Activated CD4-positive, alpha-beta T cell treated with anti-CD3 and anti-CD28 coated beads, Interleukin-2, amount 10 ng/mL, durations not matched to agents 24 days and 14 days (primary cell): ENCODE measurements at regions of chr2 and their contacts with region 1.

Region 1: DNA sequence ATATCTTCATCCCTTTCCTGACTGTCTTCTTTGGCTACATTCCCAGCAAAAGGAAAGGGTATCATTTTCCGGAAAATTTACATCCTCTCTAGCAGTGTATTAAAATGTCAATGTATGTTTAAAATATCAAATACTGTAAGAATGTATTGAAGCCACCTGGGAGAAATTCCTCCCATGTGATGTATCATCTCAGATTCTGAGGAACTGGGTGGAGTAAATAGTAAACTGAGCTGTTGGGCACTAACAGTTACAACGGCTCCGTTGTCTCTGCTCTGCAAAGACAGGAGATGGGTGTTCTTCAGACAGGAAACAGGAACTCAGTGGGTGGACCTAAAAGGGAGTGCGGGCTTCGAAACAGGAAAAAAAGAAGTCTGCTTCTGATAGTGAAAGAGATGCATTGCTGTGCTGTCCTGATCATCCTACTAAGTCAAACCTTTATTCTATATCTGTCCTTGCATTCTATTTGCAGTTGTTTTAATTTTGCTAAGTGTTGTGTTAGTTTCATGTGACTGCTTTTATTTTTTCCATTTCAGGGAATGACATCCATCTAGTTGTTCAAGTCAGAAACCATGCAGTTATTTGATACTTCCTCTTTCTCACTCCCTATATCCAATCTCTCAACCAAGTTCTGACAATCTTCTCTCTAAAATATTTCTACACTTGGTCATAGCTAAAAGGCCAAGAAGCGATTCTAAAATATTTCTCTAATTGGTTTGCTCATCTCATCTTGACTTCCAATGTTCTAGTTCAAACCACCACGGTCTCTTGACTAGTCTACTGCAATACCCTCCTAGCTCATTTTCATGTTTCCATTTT is 19.4 kb downstream of the DOK1 start:
- DNase-seq: peak; percentile 83
- H3K4me3 Mint-ChIP-seq: peak overlapping the region; percentile 75
- H3K27ac Mint-ChIP-seq: peak overlapping the region; percentile 73
- H3K4me1 Mint-ChIP-seq: peaks cover 39% of the 10 kb centered on the region
- H3K27me3 Mint-ChIP-seq: no peaks in the 10 kb centered on the region

Region 2: DNA sequence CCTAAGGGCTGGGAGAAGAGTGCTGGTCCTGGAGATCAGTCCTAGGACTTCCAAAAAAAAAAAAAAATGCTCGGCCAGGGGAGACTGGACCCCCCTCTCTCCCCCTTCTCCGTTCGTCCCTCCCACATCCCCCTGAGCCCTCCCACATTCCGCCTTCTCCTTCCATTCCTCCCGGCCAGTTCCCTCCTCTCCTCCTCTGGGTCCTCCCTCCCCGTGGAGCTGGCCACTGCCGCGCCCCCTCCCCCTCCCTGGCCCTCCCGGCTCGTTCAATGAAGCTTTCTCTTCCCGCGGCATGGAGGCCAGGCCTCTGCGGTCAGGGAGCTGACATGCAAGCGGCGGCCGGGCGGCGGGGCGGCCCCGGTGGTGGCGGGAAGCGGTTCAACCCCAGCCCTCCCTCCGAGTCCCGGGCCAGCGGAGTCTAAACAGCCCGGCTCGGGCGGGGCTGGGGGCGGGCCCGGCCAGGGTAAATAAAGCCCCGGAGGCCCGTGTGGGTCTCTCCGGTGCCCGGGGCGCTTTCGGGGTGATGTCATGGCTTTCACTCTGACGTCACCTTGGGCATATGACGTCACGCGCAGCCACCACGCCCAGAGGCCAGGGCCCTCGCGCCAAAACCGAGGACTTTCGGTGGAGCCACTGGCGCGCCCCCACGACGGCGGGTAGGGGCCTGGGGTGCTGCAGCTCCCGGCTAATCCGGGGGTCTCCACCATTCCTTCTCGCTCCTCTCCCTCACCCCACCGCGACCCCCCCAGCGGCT is 19.9 kb before region 1 on chr2 and contains the start of gene LOXL3:
- intact Hi-C with region 1: loop called (anchors 1 kb)
- DNase-seq: peak; percentile 94
- H3K4me3 Mint-ChIP-seq: peak within 1 kb of the TSS; percentile 96
- H3K27ac Mint-ChIP-seq: peak within 1 kb of the TSS; percentile 95
- H3K4me1 Mint-ChIP-seq: peaks cover 38% of the 10 kb centered on the region
- H3K27me3 Mint-ChIP-seq: peaks cover 9% of the 10 kb centered on the region
- total RNA-seq, gene LOXL3: 1.5 and 1.7 TPM in 2 replicates

Region 3: DNA sequence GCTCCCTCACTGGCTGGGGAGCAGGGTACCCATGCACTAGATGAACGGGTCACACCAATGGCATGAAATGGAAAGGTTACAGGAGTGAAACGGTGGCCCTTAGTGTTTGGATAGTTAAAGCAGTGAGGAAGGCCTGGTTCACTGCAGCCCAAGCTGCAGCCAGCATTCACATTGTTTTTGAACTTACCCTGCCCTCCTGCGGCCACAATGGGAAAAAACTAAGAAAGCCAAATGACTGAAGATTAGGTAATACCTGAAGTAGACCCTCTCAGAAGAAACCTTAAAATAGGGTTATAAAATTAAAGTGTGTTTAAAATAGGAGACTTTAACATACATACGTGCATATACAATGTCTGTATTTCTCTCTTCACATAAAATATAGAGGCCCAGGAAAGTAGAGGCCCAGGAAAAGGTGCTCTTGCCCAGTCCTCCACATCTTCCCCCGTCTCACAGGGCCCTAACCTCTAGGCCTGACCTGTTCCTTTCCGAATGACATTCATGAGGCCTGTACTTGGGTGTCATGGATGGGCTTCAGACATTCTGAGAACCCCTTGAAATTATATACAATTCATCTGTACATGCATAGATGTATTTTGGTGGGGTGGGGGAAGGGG is 13.8 kb after region 1 on chr2:
- intact Hi-C with region 1: loop called (anchors 1 kb)
- DNase-seq: peak; percentile 90
- H3K4me3 Mint-ChIP-seq: no peak overlapping the region
- H3K27ac Mint-ChIP-seq: peak overlapping the region; percentile 49
- H3K4me1 Mint-ChIP-seq: peaks cover 27% of the 10 kb centered on the region
- H3K27me3 Mint-ChIP-seq: peaks cover 22% of the 10 kb centered on the region

Region 4: DNA sequence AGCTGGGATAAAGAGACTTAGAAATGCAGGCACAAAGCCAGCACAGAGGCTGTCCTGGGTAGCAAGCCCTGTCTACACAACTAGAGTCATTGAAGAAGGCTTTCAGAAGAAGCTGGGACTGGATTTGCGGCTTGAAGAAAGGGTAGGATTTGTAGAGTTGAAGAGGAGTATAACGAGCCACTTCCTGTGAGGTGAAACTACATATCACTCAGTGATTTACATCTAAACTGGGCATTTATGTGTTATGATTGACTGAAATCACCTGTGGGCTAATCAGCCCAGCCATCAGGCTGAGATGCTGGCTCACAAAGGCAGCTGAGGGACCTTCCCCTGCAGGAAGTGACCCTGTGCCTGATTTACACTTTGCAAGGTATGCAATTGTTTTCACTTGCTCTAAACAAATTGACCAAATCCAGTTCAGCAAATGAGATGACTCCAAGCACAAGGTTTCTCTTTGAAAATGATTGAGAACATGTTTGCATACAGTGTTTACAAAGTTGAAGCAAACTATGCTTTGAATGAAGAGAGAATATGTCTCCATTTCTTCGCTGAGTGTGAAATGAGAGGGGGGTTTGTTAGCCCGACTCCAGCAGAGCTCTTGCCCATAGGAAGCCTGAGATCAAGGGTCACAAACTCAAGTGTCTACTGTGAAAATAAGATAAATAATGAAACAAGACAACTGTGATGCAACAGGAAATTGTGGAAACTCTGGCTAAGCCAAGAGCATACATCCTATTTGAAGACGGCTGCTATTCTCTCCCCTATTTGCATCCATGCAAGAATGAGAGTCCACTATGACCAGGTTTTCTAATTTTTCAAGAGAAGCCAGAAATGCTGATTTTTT is 190.7 kb after region 1 on chr2:
- intact Hi-C with region 1: no loop called
- DNase-seq: no peak
- H3K4me3 Mint-ChIP-seq: no peak overlapping the region
- H3K27ac Mint-ChIP-seq: no peak overlapping the region
- H3K4me1 Mint-ChIP-seq: peaks cover 17% of the 10 kb centered on the region
- H3K27me3 Mint-ChIP-seq: peaks cover 5% of the 10 kb centered on the region

Region 5: DNA sequence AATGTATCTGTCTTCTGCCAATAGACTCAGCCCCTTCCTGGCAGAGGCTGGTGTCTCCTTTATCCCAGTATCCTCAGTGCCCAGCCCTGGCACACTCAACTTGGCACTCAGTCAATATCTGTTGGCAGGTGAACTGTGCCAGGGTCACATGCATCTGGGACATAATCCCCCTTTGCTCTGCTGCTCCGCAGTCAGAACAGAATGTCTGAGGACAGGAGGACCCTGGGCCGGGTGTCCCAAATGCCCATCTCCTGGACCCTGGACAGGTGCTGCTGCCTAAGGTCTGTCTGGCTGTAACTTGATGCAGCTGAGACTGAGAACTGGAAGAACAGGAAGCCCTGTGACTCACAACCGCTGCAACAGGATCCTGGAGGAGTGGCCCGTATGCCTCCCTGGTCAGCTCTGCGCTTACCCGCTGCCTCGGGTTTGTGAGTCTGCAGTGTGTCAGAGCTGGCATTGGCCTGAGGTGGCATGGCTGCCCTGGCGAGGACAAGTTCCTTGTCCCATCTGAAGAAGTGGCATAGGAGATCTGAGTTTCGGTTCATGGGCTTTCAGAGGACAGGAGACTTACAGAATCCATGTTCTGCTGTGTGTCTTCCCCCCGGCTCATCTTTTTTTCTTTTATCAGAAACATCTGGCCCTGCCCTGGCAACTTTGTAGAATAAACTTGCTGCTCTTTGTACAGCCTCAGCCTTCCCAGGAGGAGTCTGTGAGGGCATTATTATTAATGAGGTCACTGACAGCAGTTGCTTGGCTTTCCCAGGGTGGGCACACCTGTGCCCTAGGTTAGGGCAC is 271.5 kb after region 1 on chr2:
- intact Hi-C with region 1: loop called (anchors 10 kb)
- DNase-seq: peak; percentile 78
- H3K4me3 Mint-ChIP-seq: peak overlapping the region; percentile 67
- H3K27ac Mint-ChIP-seq: peak overlapping the region; percentile 55
- H3K4me1 Mint-ChIP-seq: peaks cover 91% of the 10 kb centered on the region
- H3K27me3 Mint-ChIP-seq: no peaks in the 10 kb centered on the region